Mammary epithelial cell (primary cell): ENCODE measurements at regions of chr18 and their contacts with region 1.

Region 1: DNA sequence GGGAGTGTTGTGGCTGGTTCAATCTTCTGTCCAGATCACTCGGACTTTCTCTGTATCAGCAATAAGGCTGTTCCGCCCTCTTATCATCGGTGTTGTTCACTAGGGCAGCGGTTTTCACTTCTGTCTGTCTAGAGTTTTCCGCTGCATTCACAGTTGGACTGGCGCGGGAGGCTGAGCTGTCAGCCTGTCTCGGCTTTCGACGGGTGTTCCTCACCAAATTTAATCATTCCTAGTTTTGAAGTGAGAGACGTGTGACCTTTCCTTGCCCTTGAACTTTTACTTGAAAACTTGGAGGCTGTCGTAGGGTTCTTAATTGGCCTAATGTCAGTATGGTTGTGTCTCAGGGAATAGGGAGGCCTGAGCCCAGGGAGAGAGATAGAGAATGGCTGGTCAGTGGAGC is 108.3 kb downstream of the NFATC1 start:
- DNase-seq: no peak
- H3K4me3 ChIP-seq: no peak overlapping the region
- H3K27ac ChIP-seq: no peak overlapping the region
- H3K4me1 ChIP-seq: no peaks in the 10 kb centered on the region
- H3K27me3 ChIP-seq: no peaks in the 10 kb centered on the region
- CTCF ChIP-seq: no peak

Region 2: GRCh38 chr18:79429785-79430281 is 74.2 kb before region 1 on chr18:
- CTCF ChIA-PET with region 1: no interaction called
- dilution Hi-C with region 1: loop called (anchors 5 kb)
- in situ Hi-C with region 1: no loop called
- intact Hi-C with region 1: no loop called
- DNase-seq: no peak
- H3K4me3 ChIP-seq: no peak overlapping the region
- H3K27ac ChIP-seq: no peak overlapping the region
- H3K4me1 ChIP-seq: no peaks in the 10 kb centered on the region
- H3K27me3 ChIP-seq: no peaks in the 10 kb centered on the region
- CTCF ChIP-seq: no peak

Region 3: GRCh38 chr18:79453816-79454735 is 50.0 kb before region 1 on chr18:
- CTCF ChIA-PET with region 1: no interaction called
- dilution Hi-C with region 1: no loop called
- in situ Hi-C with region 1: no loop called
- intact Hi-C with region 1: no loop called
- DNase-seq: no peak
- H3K4me3 ChIP-seq: no peak overlapping the region
- H3K27ac ChIP-seq: no peak overlapping the region
- H3K4me1 ChIP-seq: peaks cover 5% of the 10 kb centered on the region
- H3K27me3 ChIP-seq: no peaks in the 10 kb centered on the region
- CTCF ChIP-seq: no peak

Region 4: DNA sequence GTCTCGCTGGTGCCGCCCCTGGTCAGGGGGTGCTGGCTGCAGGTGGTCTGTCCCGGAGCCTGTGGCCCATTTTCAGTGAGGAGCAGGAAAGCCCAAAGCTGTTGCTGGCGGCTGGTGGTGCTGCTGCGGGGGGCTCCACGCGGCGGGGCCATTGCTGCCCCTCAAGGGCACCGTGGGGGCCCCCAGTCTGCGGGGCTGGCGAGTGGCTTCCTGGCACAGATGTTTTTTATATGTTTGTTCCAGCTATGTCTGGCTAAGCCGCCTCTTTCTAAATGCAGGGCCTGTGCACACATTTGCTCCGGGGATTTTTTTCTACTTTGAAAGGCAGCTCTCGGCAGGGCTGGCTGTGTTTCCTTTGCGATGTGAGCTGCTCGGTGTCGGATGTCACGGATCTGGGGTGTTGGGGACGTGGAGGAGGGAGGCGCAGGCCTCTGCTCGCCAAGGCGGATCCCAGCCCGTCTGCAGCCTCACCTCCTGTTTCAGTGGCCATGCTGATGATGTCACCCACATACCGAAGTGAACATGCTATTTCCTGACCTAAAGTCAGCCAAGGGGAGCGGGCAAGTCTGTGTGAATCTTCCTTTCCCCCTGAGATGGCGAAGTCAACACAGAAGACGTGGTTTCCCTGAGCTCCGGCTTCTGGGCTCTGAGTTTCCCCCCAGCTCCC is 63.6 kb after region 1 on chr18:
- CTCF ChIA-PET with region 1: no interaction called
- dilution Hi-C with region 1: loop called (anchors 5 kb)
- in situ Hi-C with region 1: no loop called
- intact Hi-C with region 1: no loop called
- DNase-seq: peak; percentile 75
- H3K4me3 ChIP-seq: no peak overlapping the region
- H3K27ac ChIP-seq: peak overlapping the region; percentile 11
- H3K4me1 ChIP-seq: peaks cover 13% of the 10 kb centered on the region
- H3K27me3 ChIP-seq: no peaks in the 10 kb centered on the region
- CTCF ChIP-seq: no peak